ENCODE measurements at regions of chr12 and their contacts with region 1.

Region 1: GRCh38 chr12:126874427-126875026 is 1392.4 kb upstream of the TMEM132C start:
- DNase-seq: peak; percentile 87
- H3K4me3 ChIP-seq: no peak overlapping the region
- H3K27ac ChIP-seq: no peak overlapping the region
- H3K4me1 ChIP-seq: peaks cover 0 to 4% (median 0%) of the 10 kb centered on the region in 6 donors
- H3K27me3 ChIP-seq: peaks cover 0 to 7% (median 0%) of the 10 kb centered on the region in 7 donors
- CTCF ChIP-seq: peak; percentile 59 to 90 (median 83)
- POLR2A ChIP-seq: no peak

Region 2: GRCh38 chr12:125183187-125184067 is 1691.1 kb before region 1 on chr12:
- intact Hi-C with region 1: loop called (anchors 10 kb)
- DNase-seq: peak; percentile 92
- H3K4me3 ChIP-seq: peak overlapping the region in 1 of 8 donors; percentile 36
- H3K27ac ChIP-seq: no peak overlapping the region
- H3K4me1 ChIP-seq: peaks cover 13 to 38% (median 27%) of the 10 kb centered on the region in 6 donors
- H3K27me3 ChIP-seq: peaks cover 3 to 95% (median 47%) of the 10 kb centered on the region in 7 donors
- CTCF ChIP-seq: peak; percentile 96 to 99 (median 98)
- POLR2A ChIP-seq: no peak

Region 3: GRCh38 chr12:125533434-125534029 is 1341.0 kb before region 1 on chr12:
- intact Hi-C with region 1: loop called (anchors 10 kb)
- DNase-seq: no peak
- H3K4me3 ChIP-seq: no peak overlapping the region
- H3K27ac ChIP-seq: no peak overlapping the region
- H3K4me1 ChIP-seq: peaks cover 0 to 3% (median 0%) of the 10 kb centered on the region in 6 donors
- H3K27me3 ChIP-seq: peaks cover 0 to 38% (median 7%) of the 10 kb centered on the region in 7 donors
- CTCF ChIP-seq: peak in 8 of 11 experiments; percentile 26 to 61 (median 49)
- POLR2A ChIP-seq: no peak

Region 4: GRCh38 chr12:127327986-127328385 is 453.5 kb after region 1 on chr12:
- intact Hi-C with region 1: no loop called
- DNase-seq: no peak
- H3K4me3 ChIP-seq: no peak overlapping the region
- H3K27ac ChIP-seq: no peak overlapping the region
- H3K4me1 ChIP-seq: no peaks in the 10 kb centered on the region
- H3K27me3 ChIP-seq: no peaks in the 10 kb centered on the region
- CTCF ChIP-seq: no peak
- POLR2A ChIP-seq: no peak

Measured in spleen (tissue), 13 donors.